ENCODE measurements at regions of chr1 and their contacts with region 1.

Region 1: GRCh38 chr1:6948861-6949260 is 163.6 kb downstream of the CAMTA1 start:
- H3K4me3 ChIP-seq: no peak overlapping the region
- H3K27ac ChIP-seq: no peak overlapping the region
- H3K4me1 ChIP-seq: no peaks in the 10 kb centered on the region
- CTCF ChIP-seq: no peak

Region 2: DNA sequence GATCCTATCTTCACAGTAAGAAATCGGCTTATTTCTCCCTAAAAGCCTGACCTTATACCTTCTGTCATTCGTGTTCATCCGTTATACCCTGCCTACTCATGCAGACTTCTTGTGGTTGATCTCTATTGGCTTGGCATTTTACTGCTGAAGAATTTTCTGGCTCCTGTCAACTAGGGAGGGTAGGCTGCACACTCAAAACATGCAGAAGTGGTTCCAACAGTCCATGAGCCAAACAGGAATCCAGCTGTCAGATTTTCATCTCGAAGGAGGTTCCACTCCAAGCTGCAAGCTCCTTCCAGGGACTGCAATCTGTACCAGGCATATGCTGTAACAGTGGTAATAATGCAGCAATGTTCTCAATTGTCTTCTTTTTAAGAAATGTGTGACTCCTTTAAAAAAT is 257.4 kb before region 1 on chr1:
- CTCF ChIA-PET with region 1: no interaction called
- POLR2A ChIA-PET with region 1: no interaction called
- H3K4me3 ChIP-seq: no peak overlapping the region
- H3K27ac ChIP-seq: no peak overlapping the region
- H3K4me1 ChIP-seq: no peaks in the 10 kb centered on the region
- CTCF ChIP-seq: no peak

Region 3: GRCh38 chr1:6935361-6935883 is 13.4 kb before region 1 on chr1:
- CTCF ChIA-PET with region 1: no interaction called
- POLR2A ChIA-PET with region 1: no interaction called
- H3K4me3 ChIP-seq: no peak overlapping the region
- H3K27ac ChIP-seq: no peak overlapping the region
- H3K4me1 ChIP-seq: no peaks in the 10 kb centered on the region
- CTCF ChIP-seq: no peak

Region 4: GRCh38 chr1:6962996-6963911 is 14.4 kb after region 1 on chr1:
- CTCF ChIA-PET with region 1: no interaction called
- POLR2A ChIA-PET with region 1: interaction called, 10 read pairs
- H3K4me3 ChIP-seq: no peak overlapping the region
- H3K27ac ChIP-seq: no peak overlapping the region; the same call in 1 of the 2 replicates
- H3K4me1 ChIP-seq: peaks cover 26% of the 10 kb centered on the region
- CTCF ChIP-seq: peak; percentile 24; the same call in 1 of the 2 replicates

Measured in HEK293 (cell line).